Posterior cingulate gyrus (tissue), 11 donors: ENCODE measurements at regions of chr15 and their contacts with region 1.

Region 1: DNA sequence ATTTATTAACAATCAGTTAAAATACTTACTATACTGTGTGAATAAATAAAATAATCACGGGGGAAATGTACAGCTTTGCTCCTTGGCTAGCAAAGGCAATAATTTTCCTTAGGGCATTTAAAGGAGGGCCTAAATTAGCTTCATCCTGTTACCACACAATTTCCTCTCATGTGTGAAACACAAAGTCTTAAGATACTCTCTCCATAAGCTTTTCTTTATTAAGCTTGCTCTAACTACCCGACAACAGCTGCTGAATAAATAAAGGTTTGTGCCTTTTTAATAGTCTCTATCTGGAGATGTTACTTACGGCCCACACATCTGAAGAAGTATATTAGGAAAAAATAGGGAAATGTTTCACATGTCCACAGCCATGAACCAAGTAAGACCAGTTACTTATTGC is 29.7 kb downstream of the ZNF106 start:
- DNase-seq: no peak

Region 2: DNA sequence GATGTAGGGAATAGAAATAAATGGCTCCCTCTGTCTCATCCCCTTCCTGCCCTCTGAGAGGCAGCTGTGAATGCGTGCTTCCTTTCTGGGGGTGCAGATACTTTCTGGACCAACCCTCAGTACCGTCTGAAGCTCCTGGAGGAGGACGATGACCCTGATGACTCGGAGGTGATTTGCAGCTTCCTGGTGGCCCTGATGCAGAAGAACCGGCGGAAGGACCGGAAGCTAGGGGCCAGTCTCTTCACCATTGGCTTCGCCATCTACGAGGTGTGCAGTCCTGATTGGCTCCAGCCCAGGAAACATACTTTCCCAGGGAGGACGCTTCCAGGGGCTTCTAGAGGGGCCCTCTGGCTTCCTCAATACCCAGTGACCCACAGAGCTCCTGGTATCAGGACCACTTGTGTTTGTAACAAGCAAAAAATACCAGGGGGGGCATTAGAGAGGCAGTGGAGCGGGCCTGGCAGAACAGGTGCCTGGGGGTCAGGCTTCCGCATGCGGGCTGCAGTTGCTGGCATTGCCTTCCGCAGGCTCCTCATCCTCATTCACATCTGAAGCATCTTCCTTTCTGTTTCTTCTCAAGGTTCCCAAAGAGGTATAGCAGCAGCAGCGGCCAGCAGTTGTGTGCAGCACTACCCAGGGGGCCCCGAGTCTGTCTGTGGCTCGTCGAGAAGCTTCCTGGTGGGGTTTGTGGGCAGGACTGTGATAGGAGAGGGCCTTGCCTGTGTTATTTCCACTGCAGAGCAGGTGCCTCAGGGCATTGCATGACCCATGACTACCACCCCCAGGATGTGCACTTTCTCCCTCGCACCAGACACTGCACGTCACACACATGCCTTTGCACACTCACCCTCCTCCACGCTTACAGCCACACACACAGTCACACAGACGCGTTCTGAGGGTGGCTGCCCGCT is 59.5 kb before region 1 on chr15:
- intact Hi-C with region 1: loop called (anchors 10 kb)
- DNase-seq: no peak